PC-9 (cell line): ENCODE measurements at regions of chr18 and their contacts with region 1.

Region 1: DNA sequence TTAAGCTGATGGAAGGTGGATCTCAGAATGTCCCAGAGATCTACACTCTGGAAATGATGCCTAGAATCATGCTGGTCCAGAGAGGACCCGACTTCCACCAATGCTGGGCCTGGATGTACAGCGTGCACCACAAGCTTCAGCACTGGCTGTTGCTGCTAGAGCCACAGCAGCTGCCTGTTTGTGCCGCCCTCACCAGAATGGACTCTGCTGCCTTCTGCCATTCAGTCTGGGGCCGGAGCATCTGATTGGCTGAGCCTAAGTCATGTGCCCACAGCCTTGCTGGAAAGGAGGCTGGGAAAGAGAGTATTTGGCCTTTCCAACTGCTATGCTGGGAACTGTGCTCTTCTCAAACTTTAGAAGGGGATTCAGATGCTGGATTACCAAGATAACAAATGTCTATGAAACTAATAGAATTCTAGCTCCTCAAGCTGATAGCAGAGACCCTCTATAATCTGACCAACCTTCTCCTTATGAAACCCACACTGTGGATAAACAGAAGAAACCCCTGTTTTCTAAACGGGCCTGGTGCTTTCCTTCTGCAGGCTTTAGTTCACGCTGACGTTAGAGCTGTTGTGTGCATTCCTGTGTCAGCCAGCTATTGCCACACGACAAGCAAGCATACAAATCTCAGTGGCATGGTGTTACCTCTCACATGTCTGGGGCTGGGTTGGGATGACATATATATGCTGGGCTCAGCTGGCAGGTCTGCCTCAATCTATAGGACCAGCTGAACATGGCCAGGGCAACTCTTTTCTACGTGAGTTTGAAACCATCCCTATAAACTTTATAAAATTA is 4.1 kb upstream of the LOXHD1 start:
- DNase-seq: no peak
- H3K4me3 ChIP-seq: no peak overlapping the region
- H3K27ac ChIP-seq: no peak overlapping the region
- H3K4me1 ChIP-seq: no peaks in the 10 kb centered on the region
- H3K27me3 ChIP-seq: peaks cover 52% of the 10 kb centered on the region
- CTCF ChIP-seq: no peak

Region 2: GRCh38 chr18:45910405-45911023 is 750.6 kb before region 1 on chr18:
- CTCF ChIA-PET with region 1: no interaction called
- POLR2A ChIA-PET with region 1: no interaction called
- intact Hi-C with region 1: loop called (anchors 10 kb)
- DNase-seq: peak; percentile 28 to 62
- H3K4me3 ChIP-seq: no peak overlapping the region
- H3K27ac ChIP-seq: no peak overlapping the region
- H3K4me1 ChIP-seq: no peaks in the 10 kb centered on the region
- H3K27me3 ChIP-seq: no peaks in the 10 kb centered on the region
- CTCF ChIP-seq: peak; percentile 85

Region 3: GRCh38 chr18:45974088-45974536 is 687.0 kb before region 1 on chr18:
- CTCF ChIA-PET with region 1: no interaction called
- POLR2A ChIA-PET with region 1: no interaction called
- intact Hi-C with region 1: loop called (anchors 2 kb)
- DNase-seq: peak; percentile 29 to 73
- H3K4me3 ChIP-seq: no peak overlapping the region
- H3K27ac ChIP-seq: no peak overlapping the region
- H3K4me1 ChIP-seq: peaks cover 4% of the 10 kb centered on the region; the same call in 1 of the 2 replicates
- H3K27me3 ChIP-seq: no peaks in the 10 kb centered on the region
- CTCF ChIP-seq: peak; percentile 85

Region 4: DNA sequence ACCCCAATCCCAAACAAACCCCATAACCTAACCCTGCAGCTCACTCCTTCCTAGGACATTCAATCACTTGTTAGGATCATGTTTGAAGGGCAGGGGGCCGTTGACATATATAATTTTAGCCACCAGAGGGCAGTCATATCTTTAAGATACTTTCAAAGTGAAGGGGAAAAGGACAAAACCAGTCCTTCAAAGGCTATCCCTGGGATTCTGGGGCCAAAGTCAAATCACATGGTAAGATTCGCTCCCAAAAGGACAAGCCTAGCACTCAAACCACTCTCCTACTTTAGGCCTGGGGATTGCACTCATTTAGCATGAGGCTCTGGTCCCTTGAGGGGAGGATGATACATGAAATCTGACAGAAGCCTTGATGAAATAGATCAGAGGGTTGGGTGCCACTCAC is 512.3 kb before region 1 on chr18:
- CTCF ChIA-PET with region 1: no interaction called
- POLR2A ChIA-PET with region 1: no interaction called
- intact Hi-C with region 1: loop called (anchors 1 kb)
- DNase-seq: peak; percentile 34 to 66
- H3K4me3 ChIP-seq: no peak overlapping the region
- H3K27ac ChIP-seq: peak overlapping the region; percentile 61; the same call in 1 of the 2 replicates
- H3K4me1 ChIP-seq: peaks cover 48% of the 10 kb centered on the region
- H3K27me3 ChIP-seq: no peaks in the 10 kb centered on the region
- CTCF ChIP-seq: peak; percentile 87

Region 5: DNA sequence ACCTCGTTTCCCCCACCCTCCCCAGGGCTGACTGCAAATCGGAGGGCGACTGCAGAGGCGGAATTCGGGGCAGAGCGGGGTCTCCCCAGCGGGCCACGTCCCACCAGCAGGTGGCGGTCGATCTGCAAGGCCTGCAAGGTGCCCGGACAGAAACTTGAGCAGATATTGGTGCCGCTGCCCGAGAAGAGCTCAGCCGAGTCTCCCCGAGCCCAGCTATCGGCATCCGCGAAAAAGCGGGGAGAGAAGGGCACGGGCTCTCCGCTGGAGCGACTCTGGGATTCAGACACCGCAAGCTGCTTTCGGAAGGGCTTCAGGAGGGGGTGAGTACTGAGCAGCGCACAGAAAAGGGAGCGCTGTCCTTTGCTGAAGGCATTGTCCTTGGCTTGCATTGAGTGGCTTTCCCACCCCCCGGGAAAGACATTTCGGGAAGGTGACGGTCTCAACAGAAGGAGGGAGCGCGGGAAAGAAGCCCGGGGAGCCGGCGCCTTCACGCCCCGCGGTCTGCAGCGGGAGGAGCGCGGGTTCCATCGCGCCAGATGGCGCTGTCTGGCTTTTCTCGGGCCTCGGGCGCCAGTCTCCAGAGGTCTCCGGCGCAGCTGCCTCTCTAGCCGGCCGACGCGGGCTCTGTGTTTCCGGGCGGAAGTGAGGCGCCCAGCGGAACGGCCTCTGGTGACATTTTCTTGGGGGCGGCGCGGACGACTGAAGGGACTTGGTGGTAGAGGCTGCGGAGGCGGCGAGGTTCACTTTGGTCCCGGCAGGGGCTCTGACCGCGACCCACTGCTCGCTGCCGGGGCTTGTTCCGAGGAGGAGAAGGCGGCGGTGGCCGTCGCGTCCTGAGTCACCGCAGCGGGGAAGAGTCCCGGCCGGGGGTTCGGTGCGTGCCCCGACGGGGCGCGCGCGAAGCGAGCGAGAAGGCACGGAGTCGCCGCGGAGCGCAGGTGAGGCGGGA is 487.5 kb before region 1 on chr18:
- CTCF ChIA-PET with region 1: interaction called, 11 read pairs
- POLR2A ChIA-PET with region 1: no interaction called
- intact Hi-C with region 1: no loop called
- DNase-seq: peak; percentile 82 to 83
- H3K4me3 ChIP-seq: peak overlapping the region; percentile 98
- H3K27ac ChIP-seq: peak overlapping the region; percentile 78
- H3K4me1 ChIP-seq: peaks cover 34% of the 10 kb centered on the region
- H3K27me3 ChIP-seq: no peaks in the 10 kb centered on the region
- CTCF ChIP-seq: peak; percentile 91

Region 6: DNA sequence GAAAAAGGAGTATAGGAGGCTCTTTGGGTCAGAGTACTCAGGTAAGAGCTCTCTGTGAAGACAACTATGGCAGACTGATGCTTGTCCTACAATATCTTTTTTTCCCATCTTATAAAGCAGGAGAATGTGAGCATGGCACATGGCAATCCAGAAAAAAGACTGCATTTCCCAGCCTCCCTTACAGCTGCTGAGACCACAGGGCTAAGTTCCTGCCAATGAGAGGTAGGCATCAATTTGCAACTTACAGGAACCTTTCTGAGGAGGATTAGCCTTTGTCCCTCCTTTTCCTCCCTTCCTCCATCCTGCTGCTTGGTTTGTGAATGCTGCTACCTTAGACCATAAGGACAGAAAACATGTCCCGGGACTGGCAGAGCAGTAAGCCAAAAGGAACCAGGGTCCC is 133.5 kb after region 1 on chr18:
- CTCF ChIA-PET with region 1: no interaction called
- POLR2A ChIA-PET with region 1: no interaction called
- intact Hi-C with region 1: no loop called
- DNase-seq: no peak
- H3K4me3 ChIP-seq: no peak overlapping the region
- H3K27ac ChIP-seq: no peak overlapping the region
- H3K4me1 ChIP-seq: no peaks in the 10 kb centered on the region
- H3K27me3 ChIP-seq: no peaks in the 10 kb centered on the region
- CTCF ChIP-seq: no peak